ENCODE measurements at regions of chr3 and their contacts with region 1.

Region 1: GRCh38 chr3:55341502-55342031 is 145.5 kb downstream of the WNT5A start:
- DNase-seq: peak; percentile 44
- H3K4me3 ChIP-seq: no peak overlapping the region
- CTCF ChIP-seq: no peak

Region 2: GRCh38 chr3:55364456-55364855 is 22.9 kb after region 1 on chr3:
- CTCF ChIA-PET with region 1: interaction called, 3 read pairs
- POLR2A ChIA-PET with region 1: interaction called, 10 read pairs
- DNase-seq: peak; percentile 95
- H3K4me3 ChIP-seq: no peak overlapping the region
- CTCF ChIP-seq: no peak

Region 3: DNA sequence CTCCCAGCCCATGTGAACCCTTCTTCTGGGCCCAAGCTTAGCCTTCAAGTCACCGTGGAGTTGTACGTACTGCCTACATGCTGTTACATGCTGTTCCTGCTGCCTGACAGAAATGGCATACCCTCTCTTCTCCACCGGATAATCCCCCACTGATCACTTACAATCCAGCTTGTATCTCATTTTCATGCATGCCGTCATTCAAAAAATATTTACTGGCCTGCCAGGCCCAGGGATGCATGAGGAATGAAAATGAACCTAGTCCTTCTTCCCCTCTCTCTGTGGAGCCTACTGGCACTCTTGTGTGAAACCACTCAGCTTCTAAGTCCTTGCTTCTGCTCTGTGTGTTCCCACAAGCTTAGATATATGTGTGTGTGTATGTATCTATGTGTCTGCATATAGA is 84.9 kb after region 1 on chr3:
- CTCF ChIA-PET with region 1: no interaction called
- POLR2A ChIA-PET with region 1: no interaction called
- DNase-seq: no peak
- H3K4me3 ChIP-seq: no peak overlapping the region
- CTCF ChIP-seq: no peak